Right ventricle myocardium inferior (tissue), 1 donor: ENCODE measurements at regions of chr20 and their contacts with region 1.

Region 1: GRCh38 chr20:44217342-44218092 is 6.9 kb upstream of the OSER1 start:
- DNase-seq: no peak
- ATAC-seq: peak; percentile 73

Region 2: GRCh38 chr20:43666376-43667328 is 550.9 kb before region 1 on chr20 and contains the start of gene MYBL2:
- intact Hi-C with region 1: no loop called
- DNase-seq: peak; percentile 76
- ATAC-seq: peak; percentile 57
- total RNA-seq, gene MYBL2: 1.4 TPM

Region 3: GRCh38 chr20:43870484-43870883 is 347.0 kb before region 1 on chr20:
- intact Hi-C with region 1: no loop called
- DNase-seq: no peak
- ATAC-seq: no peak

Region 4: GRCh38 chr20:44129911-44130718 is 87.4 kb before region 1 on chr20:
- intact Hi-C with region 1: no loop called
- DNase-seq: no peak
- ATAC-seq: no peak

Region 5: DNA sequence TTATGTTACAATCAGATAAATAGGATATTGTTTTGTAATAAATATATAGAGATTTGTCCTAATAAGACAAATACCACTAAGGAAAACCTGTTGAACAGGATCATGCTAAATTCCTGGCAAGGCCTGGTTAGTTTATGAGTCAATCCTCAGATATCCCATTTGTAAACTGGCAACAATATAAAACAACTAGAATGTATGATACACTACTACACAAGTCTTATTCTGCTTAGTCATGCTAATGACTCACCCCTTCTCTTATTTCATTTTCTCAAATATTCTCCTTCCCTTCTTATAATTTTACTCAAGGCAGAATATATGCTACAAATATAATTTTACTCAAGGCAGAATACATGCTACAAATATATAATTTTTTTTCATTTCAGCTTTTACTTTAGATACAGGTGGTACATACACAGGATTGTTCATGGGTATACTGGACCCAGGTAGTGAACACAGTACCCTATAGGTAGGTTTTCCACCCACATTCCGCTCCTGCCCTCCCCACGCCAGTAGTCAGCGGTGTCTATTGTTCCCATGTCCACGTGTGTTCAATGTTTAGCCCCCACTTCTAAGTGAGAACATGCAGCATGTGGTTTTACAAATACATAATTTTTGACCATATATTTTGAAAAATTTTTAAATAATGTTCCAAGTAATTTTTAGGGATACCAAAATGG is 13.2 kb before region 1 on chr20:
- intact Hi-C with region 1: no loop called
- DNase-seq: no peak
- ATAC-seq: peak; percentile 53

Region 6: DNA sequence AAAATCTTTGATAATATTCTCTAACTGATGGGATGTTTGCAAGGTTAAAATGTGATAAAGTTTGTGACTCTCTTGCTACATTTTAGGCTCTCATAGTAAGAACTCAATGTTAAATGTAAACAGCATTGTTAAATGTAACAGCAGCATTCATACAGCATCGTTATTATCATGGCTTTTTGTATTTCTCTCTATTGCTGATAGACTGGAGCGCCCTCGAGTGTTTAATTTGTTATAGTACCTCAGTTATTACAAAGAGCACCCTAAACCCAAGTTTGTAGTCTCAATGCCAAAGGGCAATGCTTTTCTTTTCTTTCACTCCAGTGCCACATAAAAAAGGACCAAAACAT is 243.3 kb after region 1 on chr20:
- intact Hi-C with region 1: loop called (anchors 2 kb)
- DNase-seq: no peak
- ATAC-seq: no peak